ENCODE measurements at regions of chr7 and their contacts with region 1.

Region 1: GRCh38 chr7:43781726-43782607 is 23.5 kb downstream of the BLVRA start:
- DNase-seq: peak; percentile 90
- ATAC-seq: peak; percentile 92
- H3K4me3 ChIP-seq: peak overlapping the region in 2 of 3 experiments; percentile 4 to 18; a peak in 3 of 6 replicates
- H3K27ac ChIP-seq: peak overlapping the region; percentile 71
- H3K4me1 ChIP-seq: peaks cover 64% of the 10 kb centered on the region
- H3K27me3 ChIP-seq: no peaks in the 10 kb centered on the region
- CTCF ChIP-seq: no peak
- EP300 ChIP-seq: peak; percentile 61 to 85; a peak in 3 of 4 replicates
- POLR2A ChIP-seq: no peak
- RAD21 ChIP-seq: no peak

Region 2: GRCh38 chr7:43602271-43602670 is 179.7 kb before region 1 on chr7:
- CTCF ChIA-PET with region 1: no interaction called
- POLR2A ChIA-PET with region 1: no interaction called
- in situ Hi-C with region 1: no loop called
- intact Hi-C with region 1: no loop called
- DNase-seq: no peak
- ATAC-seq: no peak
- H3K4me3 ChIP-seq: no peak overlapping the region
- H3K27ac ChIP-seq: no peak overlapping the region
- H3K4me1 ChIP-seq: no peaks in the 10 kb centered on the region
- H3K27me3 ChIP-seq: no peaks in the 10 kb centered on the region
- CTCF ChIP-seq: no peak
- EP300 ChIP-seq: no peak
- POLR2A ChIP-seq: no peak
- RAD21 ChIP-seq: no peak

Region 3: GRCh38 chr7:43758029-43758821 is 23.7 kb before region 1 on chr7 and contains the start of gene BLVRA:
- CTCF ChIA-PET with region 1: no interaction called
- POLR2A ChIA-PET with region 1: interaction called, 24 read pairs
- in situ Hi-C with region 1: no loop called
- intact Hi-C with region 1: no loop called
- DNase-seq: peak; percentile 37
- ATAC-seq: peak; percentile 88
- H3K4me3 ChIP-seq: peak within 1 kb of the TSS; percentile 75 to 91 (median 82)
- H3K27ac ChIP-seq: peak within 1 kb of the TSS; percentile 60
- H3K4me1 ChIP-seq: peaks cover 58% of the 10 kb centered on the region
- H3K27me3 ChIP-seq: no peaks in the 10 kb centered on the region; a peak in 1 of 5 replicates
- CTCF ChIP-seq: no peak
- EP300 ChIP-seq: no peak
- POLR2A ChIP-seq: peak; percentile 20 to 87; a peak in 2 of 4 replicates
- RAD21 ChIP-seq: no peak
- total RNA-seq, gene BLVRA: 64.2 and 95.5 TPM in 2 replicates

Region 4: GRCh38 chr7:43764039-43764761 is 17.8 kb before region 1 on chr7:
- CTCF ChIA-PET with region 1: no interaction called
- POLR2A ChIA-PET with region 1: interaction called, 24 read pairs
- in situ Hi-C with region 1: no loop called
- intact Hi-C with region 1: no loop called
- DNase-seq: peak; percentile 58
- ATAC-seq: peak; percentile 70
- H3K4me3 ChIP-seq: peak overlapping the region in 2 of 3 experiments; percentile 45 to 47; a peak in 4 of 6 replicates
- H3K27ac ChIP-seq: peak overlapping the region; percentile 82
- H3K4me1 ChIP-seq: peaks cover 96% of the 10 kb centered on the region
- H3K27me3 ChIP-seq: no peaks in the 10 kb centered on the region; a peak in 1 of 5 replicates
- CTCF ChIP-seq: no peak
- EP300 ChIP-seq: no peak
- POLR2A ChIP-seq: no peak
- RAD21 ChIP-seq: no peak

Region 5: GRCh38 chr7:43769791-43770465 is 12.0 kb before region 1 on chr7:
- CTCF ChIA-PET with region 1: no interaction called
- POLR2A ChIA-PET with region 1: interaction called, 23 read pairs
- in situ Hi-C with region 1: no loop called
- intact Hi-C with region 1: no loop called
- DNase-seq: peak; percentile 98
- ATAC-seq: peak; percentile 99
- H3K4me3 ChIP-seq: peak overlapping the region in 1 of 3 experiments; percentile 44; a peak in 2 of 6 replicates
- H3K27ac ChIP-seq: peak overlapping the region; percentile 93
- H3K4me1 ChIP-seq: peaks cover 68% of the 10 kb centered on the region
- H3K27me3 ChIP-seq: no peaks in the 10 kb centered on the region
- CTCF ChIP-seq: peak; percentile 16; the same call in 1 of the 2 replicates
- EP300 ChIP-seq: peak; percentile 68 to 91; a peak in 3 of 4 replicates
- POLR2A ChIP-seq: no peak; a peak in 1 of 4 replicates
- RAD21 ChIP-seq: no peak